Ovary (tissue), 10 donors: ENCODE measurements at regions of chr19 and their contacts with region 1.

Region 1: DNA sequence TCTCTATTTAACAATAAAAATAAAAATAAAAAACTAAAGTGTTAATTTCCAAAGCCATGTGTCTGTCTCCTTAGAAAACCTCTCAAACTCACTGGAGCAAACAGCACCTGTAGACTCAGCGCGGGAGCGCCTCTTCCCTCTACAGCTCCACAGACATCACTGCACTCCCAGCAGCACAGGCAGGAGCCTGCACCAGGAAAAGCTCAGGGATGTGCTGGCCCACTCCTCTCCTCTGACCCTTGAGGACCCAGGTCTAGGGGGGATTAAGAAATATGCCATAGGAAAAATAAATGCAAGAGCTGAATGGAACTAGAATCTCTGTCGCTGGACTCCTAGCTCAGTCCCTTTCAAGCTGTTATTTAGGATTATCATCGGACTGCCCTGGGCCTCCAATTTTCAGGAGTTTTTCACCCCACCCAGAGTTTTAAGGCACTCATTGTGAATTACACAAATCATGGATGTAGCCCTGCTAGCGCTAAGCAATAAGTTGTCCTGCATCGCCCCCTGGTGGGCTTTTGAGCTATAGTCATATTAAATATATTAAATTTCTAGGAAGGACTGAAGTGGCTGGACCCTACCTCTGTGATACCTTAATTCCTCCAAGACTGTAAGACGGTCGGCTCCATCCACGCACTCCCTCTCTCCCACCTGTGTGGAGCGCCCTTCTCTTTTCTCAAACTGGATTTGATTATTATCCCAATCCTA is 333.9 kb downstream of the UQCRFS1 start:
- DNase-seq: peak; percentile 49 to 82 (median 76)
- H3K4me3 ChIP-seq: no peak overlapping the region
- H3K27ac ChIP-seq: no peak overlapping the region
- H3K4me1 ChIP-seq: peaks cover 3% of the 10 kb centered on the region
- H3K27me3 ChIP-seq: no peaks in the 10 kb centered on the region
- CTCF ChIP-seq: peak; percentile 53 to 81 (median 62)
- EP300 ChIP-seq: no peak
- POLR2A ChIP-seq: no peak

Region 2: DNA sequence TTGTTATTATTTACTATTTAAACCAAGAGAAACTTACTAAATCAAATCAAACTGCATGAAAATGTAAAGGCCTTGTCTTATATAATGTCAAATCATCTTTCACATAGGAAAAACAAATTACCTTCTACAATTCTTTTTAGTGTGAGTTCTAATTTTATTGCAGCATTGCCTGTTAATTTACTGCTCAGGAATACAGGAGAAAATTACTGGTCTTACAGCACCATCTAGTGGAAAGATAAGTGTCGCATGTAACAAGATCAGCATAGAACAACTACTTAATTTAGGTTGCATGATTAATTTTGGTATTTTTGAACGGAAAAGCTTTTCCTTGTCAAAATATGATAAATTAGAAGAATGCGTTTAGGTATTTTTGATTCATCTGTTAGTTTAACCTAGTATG is 168.7 kb before region 1 on chr19:
- intact Hi-C with region 1: no loop called
- DNase-seq: no peak
- H3K4me3 ChIP-seq: no peak overlapping the region
- H3K27ac ChIP-seq: no peak overlapping the region
- H3K4me1 ChIP-seq: no peaks in the 10 kb centered on the region
- H3K27me3 ChIP-seq: no peaks in the 10 kb centered on the region
- CTCF ChIP-seq: peak in 2 of 3 donors; percentile 11 to 42
- EP300 ChIP-seq: no peak
- POLR2A ChIP-seq: no peak

Region 3: GRCh38 chr19:28737021-28737895 is 141.8 kb before region 1 on chr19:
- intact Hi-C with region 1: loop called in 3 of 4 experiments (anchors 2 to 10 kb)
- DNase-seq: peak in 3 of 5 donors; percentile 18 to 43 (median 28)
- H3K4me3 ChIP-seq: no peak overlapping the region
- H3K27ac ChIP-seq: peak overlapping the region in 1 of 2 donors; percentile 46
- H3K4me1 ChIP-seq: no peaks in the 10 kb centered on the region
- H3K27me3 ChIP-seq: no peaks in the 10 kb centered on the region
- CTCF ChIP-seq: peak; percentile 32 to 45 (median 32)
- EP300 ChIP-seq: no peak
- POLR2A ChIP-seq: no peak

Region 4: DNA sequence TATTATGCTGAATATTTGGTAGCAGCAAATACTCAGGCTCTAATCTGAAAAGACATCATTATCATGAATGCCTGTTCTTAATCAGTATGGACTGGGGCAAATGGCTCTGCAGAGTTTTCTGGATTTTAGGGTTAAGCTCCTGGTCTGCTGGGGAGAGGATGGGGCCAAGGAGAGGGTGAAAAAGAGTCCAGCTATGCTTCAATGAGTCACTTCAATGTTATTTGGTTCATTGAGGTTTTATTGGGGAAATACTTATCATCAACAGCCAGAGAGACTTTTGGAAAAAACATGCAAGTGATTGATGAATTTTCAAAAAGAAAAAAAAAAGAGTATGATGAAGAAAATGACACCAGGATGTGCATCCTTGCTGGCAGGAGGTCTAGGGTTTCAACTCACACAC is 55.6 kb after region 1 on chr19:
- intact Hi-C with region 1: no loop called
- DNase-seq: no peak
- H3K4me3 ChIP-seq: no peak overlapping the region
- H3K27ac ChIP-seq: no peak overlapping the region
- H3K4me1 ChIP-seq: no peaks in the 10 kb centered on the region
- H3K27me3 ChIP-seq: no peaks in the 10 kb centered on the region
- CTCF ChIP-seq: no peak
- EP300 ChIP-seq: no peak
- POLR2A ChIP-seq: no peak